ENCODE measurements at regions of chr2 and their contacts with region 1.

Region 1: DNA sequence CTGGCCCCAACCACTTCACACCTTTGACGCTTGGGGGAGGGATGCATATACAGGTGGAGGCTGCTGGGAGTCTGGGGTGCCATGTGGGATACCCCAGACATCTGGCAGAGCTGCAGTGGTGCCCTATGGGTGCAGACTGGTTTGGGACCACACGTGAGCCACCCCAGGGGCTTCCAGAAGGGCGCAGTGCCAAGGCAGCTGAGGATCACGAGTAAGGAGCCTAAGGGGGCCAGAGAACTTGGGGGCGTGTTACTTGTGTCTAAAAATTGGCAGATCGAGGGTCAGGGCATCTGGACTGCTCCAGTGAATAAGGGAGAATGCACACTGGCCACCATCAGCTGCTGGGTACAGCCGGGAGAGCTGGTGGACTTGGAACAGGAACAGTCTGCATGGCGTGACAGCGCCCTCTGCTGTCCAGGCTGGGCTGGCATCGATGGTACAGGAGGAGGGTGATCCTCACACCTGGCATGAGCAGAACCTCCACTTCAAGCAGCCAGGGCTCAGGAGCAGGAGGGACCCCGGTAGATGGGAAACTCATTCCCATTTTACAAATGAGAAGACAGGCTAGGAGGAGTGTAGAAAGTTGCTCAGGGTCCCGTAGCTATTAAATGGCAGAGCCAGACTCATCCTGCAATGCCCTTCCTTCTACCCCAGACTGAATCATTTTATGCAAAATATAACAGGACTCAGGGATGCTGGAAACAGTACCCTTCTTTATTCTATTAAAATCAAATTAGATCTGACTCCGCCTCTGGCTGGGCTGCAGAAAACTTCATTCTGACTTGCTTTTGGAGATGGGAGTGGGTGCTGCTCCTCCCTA is 60.4 kb downstream of the ATOH8 start:
- DNase-seq: peak; percentile 91 to 96 (median 94)
- H3K4me3 ChIP-seq: no peak overlapping the region
- H3K27ac ChIP-seq: peak overlapping the region in 2 of 59 donors; percentile 13 to 36
- H3K27me3 ChIP-seq: no peaks in the 10 kb centered on the region
- CTCF ChIP-seq: peak; percentile 83 to 100 (median 98)

Region 2: DNA sequence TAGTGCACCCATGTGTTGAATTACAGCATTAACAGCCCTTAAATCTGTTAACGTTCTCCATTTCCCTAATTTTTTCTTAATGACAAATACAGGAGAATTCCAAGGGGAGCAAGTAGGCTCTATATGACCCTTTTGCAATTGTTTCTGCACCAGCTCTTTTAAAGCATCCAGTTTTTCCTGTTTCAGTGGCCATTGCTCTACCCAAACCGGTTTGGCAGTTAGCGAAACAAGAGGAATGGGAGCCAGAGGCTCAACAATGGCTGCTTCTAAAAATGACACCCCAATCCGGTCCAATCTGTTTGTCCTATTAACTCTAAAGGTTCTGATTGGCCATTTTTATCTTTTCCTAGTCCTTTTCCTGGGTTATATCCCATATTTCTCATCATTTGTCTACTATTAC is 1340.0 kb before region 1 on chr2:
- intact Hi-C with region 1: no loop called
- DNase-seq: no peak
- H3K4me3 ChIP-seq: no peak overlapping the region
- H3K27ac ChIP-seq: no peak overlapping the region
- H3K27me3 ChIP-seq: no peaks in the 10 kb centered on the region
- CTCF ChIP-seq: no peak

Region 3: DNA sequence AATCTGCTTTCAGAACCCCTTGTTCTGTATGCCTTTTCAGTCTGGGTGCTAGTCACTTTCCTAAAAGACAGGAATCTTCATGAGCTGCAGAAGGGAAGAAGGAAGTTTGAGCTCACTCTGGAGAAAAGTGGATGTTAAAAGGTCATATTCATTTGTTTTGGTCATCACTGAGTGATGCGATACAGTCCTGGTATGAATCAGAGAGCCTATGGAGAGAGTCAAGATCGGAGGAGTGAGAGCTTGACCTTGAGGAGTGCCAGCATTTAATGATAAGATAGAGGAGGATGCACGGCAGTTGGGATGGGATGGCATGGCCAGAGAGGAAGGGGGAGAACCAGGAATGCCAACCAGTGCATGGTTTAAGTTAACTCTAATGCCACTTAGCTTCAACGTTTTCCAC is 178.6 kb before region 1 on chr2:
- intact Hi-C with region 1: loop called (anchors 2 to 10 kb)
- DNase-seq: no peak
- H3K4me3 ChIP-seq: no peak overlapping the region
- H3K27ac ChIP-seq: peak overlapping the region in 10 of 59 donors; percentile 10 to 56 (median 26)
- H3K27me3 ChIP-seq: no peaks in the 10 kb centered on the region
- CTCF ChIP-seq: no peak

Region 4: GRCh38 chr2:85648619-85649018 is 165.6 kb before region 1 on chr2:
- intact Hi-C with region 1: loop called in 1 of 2 experiments (anchors 10 kb)
- DNase-seq: no peak
- H3K4me3 ChIP-seq: no peak overlapping the region
- H3K27ac ChIP-seq: peak overlapping the region in 38 of 59 donors; percentile 1 to 75 (median 45)
- H3K27me3 ChIP-seq: no peaks in the 10 kb centered on the region
- CTCF ChIP-seq: peak in 36 of 56 donors; percentile 7 to 49 (median 28)

Measured in dorsolateral prefrontal cortex (tissue), 120 donors.